ENCODE measurements at regions of chr15 and their contacts with region 1.

Region 1: GRCh38 chr15:89379818-89380217 is 45.2 kb upstream of the POLG start:
- DNase-seq: peak in 2 of 10 donors; percentile 37 to 58

Region 2: DNA sequence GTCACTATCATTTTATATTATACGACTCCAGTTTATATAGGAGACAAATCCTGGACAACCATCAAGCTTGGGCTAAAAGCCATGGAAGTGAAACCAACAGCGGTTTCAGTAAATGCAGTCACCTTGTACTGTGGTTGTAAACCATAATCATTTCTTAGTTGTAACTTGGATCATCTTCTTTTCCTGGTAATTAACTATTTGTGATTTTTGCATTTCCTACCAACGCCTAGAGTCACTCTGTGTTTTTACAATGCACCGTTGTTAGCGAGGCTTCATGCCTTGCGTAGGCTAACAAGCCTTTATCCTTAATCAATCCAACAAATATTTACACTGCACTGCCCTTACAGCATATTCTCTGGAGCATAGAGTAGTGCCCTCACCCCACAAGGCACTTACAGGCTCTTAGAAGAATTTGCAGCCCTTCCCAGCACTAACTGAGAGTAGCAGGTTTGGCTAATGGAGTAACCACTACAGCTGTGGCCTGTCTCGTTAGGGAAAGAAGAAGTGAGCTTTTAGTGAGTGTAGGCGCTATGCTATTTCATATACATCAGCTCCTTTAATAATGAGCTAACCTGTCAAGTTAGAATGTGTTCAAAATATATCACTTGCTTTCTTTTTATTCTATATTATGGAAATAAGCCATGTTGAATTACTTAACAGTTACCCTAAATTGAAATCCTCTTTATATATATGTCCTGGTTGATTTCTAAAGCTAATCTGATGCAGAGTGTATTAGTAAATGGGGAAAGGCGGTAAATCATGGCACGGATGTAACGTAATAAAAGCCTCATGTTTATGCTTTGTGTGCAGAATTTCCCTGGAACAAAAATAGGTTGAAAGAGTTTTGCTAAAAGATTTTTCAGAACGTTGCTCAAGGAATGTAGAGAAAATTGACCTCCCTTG is 228.8 kb before region 1 on chr15:
- intact Hi-C with region 1: no loop called
- DNase-seq: no peak

Region 3: GRCh38 chr15:89329329-89330084 is 50.3 kb before region 1 on chr15:
- intact Hi-C with region 1: no loop called
- DNase-seq: no peak

Region 4: GRCh38 chr15:89341316-89342005 is 38.4 kb before region 1 on chr15:
- intact Hi-C with region 1: loop called (anchors 2 kb)
- DNase-seq: peak in 1 of 10 donors; percentile 76

Measured in posterior cingulate gyrus (tissue), 11 donors.